ENCODE measurements at regions of chr15 and their contacts with region 1.

Region 1: DNA sequence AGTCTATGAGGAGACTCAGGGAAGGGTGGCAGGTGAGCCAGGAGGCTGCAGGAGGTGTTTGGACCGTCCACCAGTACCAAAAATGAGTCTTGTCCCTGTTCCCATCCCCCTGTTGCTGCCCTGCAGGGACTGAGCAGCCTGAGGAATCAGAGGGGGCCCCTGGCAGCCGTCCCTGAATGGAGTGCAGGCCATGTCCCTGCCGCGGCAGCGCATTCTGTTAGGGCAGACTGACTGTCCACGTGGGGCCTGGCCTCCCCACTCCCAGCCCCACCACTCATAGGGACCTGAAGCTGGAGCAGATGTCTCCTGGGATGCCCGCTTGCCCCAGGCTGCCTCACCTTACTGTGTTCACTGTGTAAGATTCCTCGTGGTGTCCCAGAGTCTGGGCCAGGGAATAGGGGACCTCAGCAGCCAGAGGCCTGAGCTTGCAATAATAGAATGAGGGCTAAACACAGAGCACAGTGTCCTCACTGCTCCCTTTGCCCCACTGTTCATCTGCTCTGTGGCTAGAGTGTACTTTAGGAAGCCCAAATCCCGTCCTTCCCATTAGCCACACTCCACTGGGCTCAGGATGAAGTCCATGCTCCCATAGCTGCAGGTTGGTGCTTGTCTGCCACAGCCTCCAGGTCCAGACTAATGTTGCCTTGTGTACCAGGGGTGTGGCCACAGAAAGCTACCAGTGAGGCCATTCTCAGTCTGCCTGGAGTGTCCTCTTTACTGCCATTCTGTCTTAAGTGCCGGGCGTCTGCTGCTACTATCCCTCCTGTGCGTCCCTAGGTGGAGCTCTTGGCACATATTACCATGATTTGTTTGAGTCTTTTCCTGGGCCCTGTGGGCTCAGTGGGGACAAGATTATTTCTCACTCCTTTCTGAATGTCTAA is 63.2 kb downstream of the HCN4 start:
- DNase-seq: peak; percentile 75
- H3K4me3 Mint-ChIP-seq: no peak overlapping the region
- H3K27ac Mint-ChIP-seq: no peak overlapping the region
- H3K4me1 Mint-ChIP-seq: no peaks in the 10 kb centered on the region
- H3K27me3 Mint-ChIP-seq: no peaks in the 10 kb centered on the region
- CTCF ChIP-seq: peak; percentile 66

Region 2: GRCh38 chr15:73539212-73540125 is 233.9 kb after region 1 on chr15:
- CTCF ChIA-PET with region 1: no interaction called
- POLR2A ChIA-PET with region 1: no interaction called
- intact Hi-C with region 1: loop called (anchors 10 kb)
- DNase-seq: peak; percentile 48
- H3K4me3 Mint-ChIP-seq: no peak overlapping the region
- H3K27ac Mint-ChIP-seq: peak overlapping the region; percentile 52
- H3K4me1 Mint-ChIP-seq: peaks cover 7% of the 10 kb centered on the region
- H3K27me3 Mint-ChIP-seq: no peaks in the 10 kb centered on the region
- CTCF ChIP-seq: no peak

Region 3: GRCh38 chr15:73560501-73561117 is 255.0 kb after region 1 on chr15:
- CTCF ChIA-PET with region 1: interaction called, 3 read pairs
- POLR2A ChIA-PET with region 1: no interaction called
- intact Hi-C with region 1: loop called (anchors 5 kb)
- DNase-seq: peak; percentile 72
- H3K4me3 Mint-ChIP-seq: no peak overlapping the region
- H3K27ac Mint-ChIP-seq: no peak overlapping the region
- H3K4me1 Mint-ChIP-seq: peaks cover 7% of the 10 kb centered on the region
- H3K27me3 Mint-ChIP-seq: no peaks in the 10 kb centered on the region
- CTCF ChIP-seq: peak; percentile 51

Region 4: DNA sequence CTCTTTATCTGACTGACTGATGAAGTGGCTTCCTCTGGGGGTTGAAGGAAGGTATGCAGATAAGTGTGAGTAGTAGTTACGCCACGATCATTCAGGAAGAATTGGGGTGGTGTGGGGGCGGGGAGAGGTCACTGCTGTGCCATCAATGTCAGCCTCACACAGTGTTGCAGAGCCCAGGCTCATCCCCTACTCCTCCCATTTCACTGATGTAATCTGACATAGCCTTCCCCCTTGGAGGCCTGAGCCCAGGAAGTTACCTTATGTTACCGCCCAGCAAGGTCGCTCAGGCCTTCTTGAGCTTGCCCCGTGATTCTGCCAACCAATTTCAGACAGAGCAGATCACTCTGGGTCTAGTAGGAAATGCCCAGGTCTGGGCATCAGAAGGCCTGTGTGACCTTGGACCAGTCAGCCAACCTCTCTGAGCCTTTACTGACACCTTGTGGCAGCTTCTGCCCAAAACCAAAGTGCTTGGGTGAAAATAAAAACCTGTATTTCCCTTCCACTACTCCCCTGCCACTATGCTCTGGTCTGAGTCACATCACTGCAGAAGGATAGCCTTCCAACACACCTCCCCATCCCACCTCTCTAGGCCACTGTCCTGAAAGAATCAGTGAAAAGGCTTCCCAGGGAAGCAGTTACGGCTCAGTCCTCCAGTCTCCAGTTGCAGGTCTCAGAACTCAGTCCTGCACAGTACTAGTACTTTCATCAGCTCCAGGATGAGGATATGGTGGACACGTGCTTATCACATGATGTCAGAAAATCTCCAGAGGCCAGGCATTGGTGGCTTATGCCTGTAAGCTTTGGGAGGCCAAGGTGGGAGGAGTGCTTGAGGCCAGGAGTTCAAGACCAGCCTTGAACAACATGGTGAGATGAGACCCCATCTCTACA is 475.7 kb after region 1 on chr15:
- CTCF ChIA-PET with region 1: no interaction called
- POLR2A ChIA-PET with region 1: no interaction called
- intact Hi-C with region 1: loop called (anchors 2 kb)
- DNase-seq: peak; percentile 55
- H3K4me3 Mint-ChIP-seq: no peak overlapping the region
- H3K27ac Mint-ChIP-seq: no peak overlapping the region
- H3K4me1 Mint-ChIP-seq: no peaks in the 10 kb centered on the region
- H3K27me3 Mint-ChIP-seq: no peaks in the 10 kb centered on the region
- CTCF ChIP-seq: peak; percentile 38

Measured in MCF 10A (cell line).